Dorsolateral prefrontal cortex (tissue), 120 donors: ENCODE measurements at regions of chr1 and their contacts with region 1.

Region 1: GRCh38 chr1:37995751-37996345 is 6.0 kb upstream of the SF3A3 start:
- DNase-seq: no peak
- H3K4me3 ChIP-seq: peak overlapping the region; percentile 30 to 71 (median 53)
- H3K27ac ChIP-seq: peak overlapping the region in 45 of 59 donors; percentile 8 to 87 (median 61)
- H3K27me3 ChIP-seq: peaks cover 0 to 4% (median 0%) of the 10 kb centered on the region in 45 donors
- CTCF ChIP-seq: no peak

Region 2: DNA sequence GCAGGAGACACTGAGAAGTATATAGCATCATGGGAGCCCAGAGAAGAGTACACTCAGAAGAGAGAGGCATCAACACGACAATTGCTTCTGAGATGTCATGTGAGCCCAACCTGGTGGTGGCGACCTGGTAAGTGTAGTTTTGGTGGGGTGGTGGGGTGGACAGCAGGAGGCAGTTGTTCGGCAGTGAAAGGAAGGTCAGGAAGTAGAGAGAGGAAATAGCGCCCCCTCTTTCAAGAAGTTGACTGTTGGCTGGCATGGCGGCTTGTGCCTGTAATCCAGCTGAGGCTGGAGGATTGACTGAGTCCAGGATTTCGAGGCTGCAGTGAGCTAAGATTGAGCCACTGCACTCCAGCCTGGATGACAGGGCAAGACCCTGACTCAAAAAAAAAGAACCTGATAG is 373.7 kb before region 1 on chr1:
- intact Hi-C with region 1: no loop called
- DNase-seq: no peak
- H3K4me3 ChIP-seq: no peak overlapping the region
- H3K27ac ChIP-seq: no peak overlapping the region
- H3K27me3 ChIP-seq: peaks cover 0 to 63% (median 17%) of the 10 kb centered on the region in 45 donors
- CTCF ChIP-seq: no peak

Region 3: DNA sequence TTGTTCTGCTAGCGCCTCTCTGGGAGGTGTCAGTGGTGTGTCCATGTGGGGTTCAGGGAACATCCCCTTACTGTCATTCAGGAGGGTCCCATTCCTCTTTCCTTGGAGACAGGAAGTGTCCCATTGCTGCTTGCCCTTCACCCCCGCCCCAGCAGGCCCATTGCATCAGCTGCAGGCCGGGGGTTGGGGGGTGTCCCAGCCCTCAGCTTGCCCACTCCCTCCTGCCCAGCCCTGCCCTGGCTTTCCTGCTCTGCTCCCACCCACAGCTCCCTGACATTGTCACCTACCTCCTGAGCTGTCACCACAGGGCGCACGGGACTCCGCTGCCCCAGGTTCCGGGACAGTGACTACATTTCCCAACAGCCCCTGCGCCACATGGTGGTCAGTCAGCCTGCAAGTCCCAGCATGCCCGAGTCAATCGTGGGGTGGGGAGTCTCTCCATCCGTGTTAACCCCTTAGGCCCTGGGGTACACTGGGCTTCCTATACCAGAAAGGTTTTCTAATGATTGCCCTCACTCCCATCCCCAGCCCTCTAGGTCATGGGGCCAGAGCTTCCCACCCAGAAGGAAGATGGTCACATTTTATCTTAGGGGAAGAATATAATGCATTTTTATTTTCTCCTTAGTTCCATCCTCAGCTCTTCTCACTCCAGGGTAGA is 49.0 kb before region 1 on chr1 and contains the start of gene INPP5B:
- intact Hi-C with region 1: loop called in 1 of 2 experiments (anchors 5 kb)
- DNase-seq: peak; percentile 86 to 97 (median 95)
- H3K4me3 ChIP-seq: peak within 1 kb of the TSS; percentile 60 to 97 (median 87)
- H3K27ac ChIP-seq: peak within 1 kb of the TSS; percentile 48 to 97 (median 89)
- H3K27me3 ChIP-seq: no peaks in the 10 kb centered on the region
- CTCF ChIP-seq: peak in 50 of 56 donors; percentile 19 to 63 (median 41)
- total RNA-seq, gene INPP5B: 23.9 to 71.7 (median 40.7) TPM

Region 4: DNA sequence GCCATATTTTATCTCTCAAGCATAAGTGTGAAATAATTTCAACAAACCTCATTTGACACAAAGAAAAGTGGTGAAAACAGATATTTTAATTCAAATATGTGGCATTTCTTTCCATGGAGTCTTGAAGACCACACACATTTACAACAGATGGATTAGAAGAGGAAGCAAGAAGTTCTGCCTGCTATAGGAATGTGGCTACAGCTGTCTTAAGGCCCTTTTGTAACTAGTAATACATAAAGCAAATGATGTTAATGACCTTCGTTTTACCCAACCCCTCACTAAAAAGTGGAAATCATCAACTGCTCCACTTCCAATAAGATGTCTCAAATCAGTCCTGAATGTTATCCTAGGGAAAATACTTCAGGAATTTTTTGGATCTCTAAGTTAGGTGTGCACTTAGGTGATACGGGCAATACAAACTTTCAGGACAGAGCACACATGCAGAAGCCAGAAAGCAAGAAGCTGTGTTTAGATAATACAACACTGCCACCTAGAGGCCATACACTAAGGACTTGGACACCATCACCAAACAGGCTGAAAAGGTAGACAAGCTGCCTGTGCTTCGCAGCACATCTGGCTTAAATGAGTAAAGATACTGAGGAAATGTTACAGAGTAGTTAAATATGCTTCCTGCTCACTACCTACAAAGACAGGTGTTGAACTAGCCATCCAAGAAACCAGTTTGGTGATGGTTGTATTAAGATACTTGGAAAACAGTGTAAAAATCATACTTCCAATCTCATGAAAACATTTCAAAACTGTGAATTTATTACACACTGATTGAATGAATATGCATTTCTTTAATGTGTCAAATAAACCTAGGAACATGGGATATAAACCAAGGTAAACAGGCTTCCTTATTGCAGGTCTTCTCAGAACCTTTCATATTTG is 839.3 kb after region 1 on chr1:
- intact Hi-C with region 1: loop called in 1 of 2 experiments (anchors 10 kb)
- DNase-seq: peak in 2 of 10 donors; percentile 41 to 51
- H3K4me3 ChIP-seq: no peak overlapping the region
- H3K27ac ChIP-seq: no peak overlapping the region
- H3K27me3 ChIP-seq: peaks cover 0 to 6% (median 0%) of the 10 kb centered on the region in 45 donors
- CTCF ChIP-seq: peak; percentile 72 to 96 (median 88)